ENCODE measurements at regions of chr10 and their contacts with region 1.

Region 1: GRCh38 chr10:63256009-63256773 is 123.1 kb downstream of the NRBF2 start:
- DNase-seq: peak; percentile 59 to 93 (median 88)
- H3K4me3 ChIP-seq: peak overlapping the region in 5 of 7 experiments; percentile 7 to 55 (median 42)
- H3K27ac ChIP-seq: peak overlapping the region; percentile 42 to 59
- H3K4me1 ChIP-seq: peaks cover 41 to 80% (median 63%) of the 10 kb centered on the region in 4 experiments
- H3K27me3 ChIP-seq: no peaks in the 10 kb centered on the region

Region 2: GRCh38 chr10:63008491-63008890 is 247.7 kb before region 1 on chr10:
- CTCF ChIA-PET with region 1: no interaction called
- POLR2A ChIA-PET with region 1: no interaction called
- DNase-seq: peak in 1 of 3 donors; percentile 3
- H3K4me3 ChIP-seq: no peak overlapping the region
- H3K27ac ChIP-seq: no peak overlapping the region
- H3K4me1 ChIP-seq: no peaks in the 10 kb centered on the region
- H3K27me3 ChIP-seq: no peaks in the 10 kb centered on the region

Region 3: DNA sequence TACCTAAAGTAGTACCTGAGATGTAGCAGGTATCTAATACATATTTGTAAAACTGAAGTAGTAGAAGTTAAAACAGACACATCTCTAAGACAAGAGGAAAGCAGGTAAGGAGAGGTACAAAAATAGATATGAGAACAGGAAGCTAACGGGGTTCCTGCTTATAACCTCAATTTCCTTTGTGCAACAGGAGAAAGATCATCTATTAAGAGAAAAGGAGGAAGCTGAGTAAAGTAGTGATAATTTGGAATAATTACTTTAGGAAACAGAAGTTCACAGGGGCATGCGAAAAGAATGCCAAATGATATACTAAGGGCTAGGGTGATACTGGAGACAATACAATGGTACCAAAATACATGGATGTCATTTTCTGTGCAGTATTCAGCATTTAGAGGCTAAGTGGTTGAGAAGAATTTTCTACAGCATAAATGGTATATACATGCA is 14.3 kb before region 1 on chr10:
- CTCF ChIA-PET with region 1: interaction called, 11 read pairs
- POLR2A ChIA-PET with region 1: no interaction called
- DNase-seq: peak in 2 of 3 donors; percentile 47 to 65
- H3K4me3 ChIP-seq: peak overlapping the region in 6 of 7 experiments; percentile 19 to 67 (median 36)
- H3K27ac ChIP-seq: peak overlapping the region; percentile 46 to 74
- H3K4me1 ChIP-seq: peaks cover 40 to 73% (median 52%) of the 10 kb centered on the region in 4 experiments
- H3K27me3 ChIP-seq: no peaks in the 10 kb centered on the region

Region 4: GRCh38 chr10:63268798-63269503 is 12.8 kb after region 1 on chr10:
- CTCF ChIA-PET with region 1: interaction called, 20 read pairs
- POLR2A ChIA-PET with region 1: interaction called, 5 read pairs
- DNase-seq: peak; percentile 96 to 99 (median 98)
- H3K4me3 ChIP-seq: peak overlapping the region; percentile 51 to 100 (median 87)
- H3K27ac ChIP-seq: peak overlapping the region; percentile 90 to 94
- H3K4me1 ChIP-seq: peaks cover 8 to 26% (median 18%) of the 10 kb centered on the region in 4 experiments
- H3K27me3 ChIP-seq: no peaks in the 10 kb centered on the region

Measured in common myeloid progenitor, CD34-positive (primary cell).